Heart left ventricle (tissue), 16 donors: ENCODE measurements at regions of chr12 and their contacts with region 1.

Region 1: GRCh38 chr12:124837958-124838803 is 25.5 kb downstream of the SCARB1 start:
- DNase-seq: peak; percentile 69 to 88 (median 80)
- ATAC-seq: peak; percentile 78 to 91 (median 87)
- H3K4me3 ChIP-seq: no peak overlapping the region
- H3K27ac ChIP-seq: peak overlapping the region; percentile 24 to 82 (median 70)
- H3K4me1 ChIP-seq: peaks cover 0 to 45% (median 28%) of the 10 kb centered on the region in 12 donors
- H3K27me3 ChIP-seq: no peaks in the 10 kb centered on the region
- CTCF ChIP-seq: no peak
- POLR2A ChIP-seq: no peak

Region 2: DNA sequence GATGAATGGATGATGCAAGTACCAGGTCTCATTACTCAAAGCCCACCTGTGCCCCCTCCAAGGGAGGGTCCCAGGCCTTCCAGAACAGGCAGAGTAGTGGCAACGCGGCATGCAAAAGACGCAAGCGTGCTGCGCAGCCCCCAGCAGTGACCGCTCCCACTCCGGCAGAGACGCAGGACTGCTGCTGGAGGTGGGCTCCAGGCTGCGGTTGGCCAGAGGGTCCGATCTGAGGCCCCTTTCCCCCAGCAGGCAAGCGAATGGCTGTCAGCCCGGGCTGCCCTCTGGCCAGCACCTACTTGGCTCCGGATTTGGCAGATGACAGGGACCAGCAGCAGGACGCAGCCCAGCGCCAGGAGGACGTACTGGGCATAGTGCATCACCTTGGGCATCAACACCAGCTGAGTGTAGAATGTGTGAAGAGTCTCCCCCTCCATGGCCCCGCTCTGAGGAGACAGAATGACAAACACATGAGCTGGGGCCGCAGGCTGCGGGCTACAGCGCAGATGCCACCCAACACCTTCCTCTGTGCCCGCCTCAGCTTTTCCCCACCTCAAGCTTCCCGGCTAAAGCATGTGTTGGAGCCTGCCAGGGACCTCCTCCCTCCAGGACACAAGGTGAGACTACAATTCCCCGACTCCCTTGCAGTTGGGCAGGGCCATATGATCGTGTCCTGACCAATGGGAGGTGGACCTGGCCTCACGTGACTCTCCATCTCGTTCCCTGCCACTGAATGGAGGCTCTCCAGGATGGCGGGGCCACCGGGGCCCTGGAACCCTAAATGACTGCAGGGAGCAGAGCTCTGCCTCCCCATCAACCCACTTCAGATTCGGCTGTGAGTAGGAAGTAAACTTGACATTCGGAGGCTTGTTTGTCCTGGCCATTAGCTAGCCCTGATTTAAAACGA is 51.9 kb before region 1 on chr12:
- intact Hi-C with region 1: loop called in 1 of 10 experiments (anchors 5 kb)
- DNase-seq: peak; percentile 83 to 90 (median 87)
- ATAC-seq: peak; percentile 96 to 99 (median 98)
- H3K4me3 ChIP-seq: peak overlapping the region in 10 of 12 donors; percentile 9 to 71 (median 50)
- H3K27ac ChIP-seq: peak overlapping the region in 1 of 12 donors; percentile 47
- H3K4me1 ChIP-seq: peaks cover 0 to 6% (median 0%) of the 10 kb centered on the region in 12 donors
- H3K27me3 ChIP-seq: no peaks in the 10 kb centered on the region
- CTCF ChIP-seq: no peak
- POLR2A ChIP-seq: no peak

Region 3: GRCh38 chr12:124804011-124804621 is 34.1 kb before region 1 on chr12:
- intact Hi-C with region 1: no loop called
- DNase-seq: no peak
- ATAC-seq: peak; percentile 51 to 68 (median 64)
- H3K4me3 ChIP-seq: no peak overlapping the region
- H3K27ac ChIP-seq: peak overlapping the region in 1 of 12 donors; percentile 14
- H3K4me1 ChIP-seq: peaks cover 0 to 6% (median 0%) of the 10 kb centered on the region in 12 donors
- H3K27me3 ChIP-seq: no peaks in the 10 kb centered on the region
- CTCF ChIP-seq: no peak
- POLR2A ChIP-seq: no peak